Activated naive CD4-positive, alpha-beta T cell treated with anti-CD3 and anti-CD28 coated beads for 36 hours (primary cell): ENCODE measurements at regions of chr16 and their contacts with region 1.

Region 1: GRCh38 chr16:74700438-74701225 is at the start of gene MLKL:
- DNase-seq: peak; percentile 71
- H3K4me3 Mint-ChIP-seq: peak within 1 kb of the TSS; percentile 93
- H3K27ac Mint-ChIP-seq: peak within 1 kb of the TSS; percentile 96
- H3K4me1 Mint-ChIP-seq: peaks cover 61% of the 10 kb centered on the region
- H3K27me3 Mint-ChIP-seq: no peaks in the 10 kb centered on the region
- total RNA-seq, gene MLKL: 10.7 to 12.0 TPM

Region 2: DNA sequence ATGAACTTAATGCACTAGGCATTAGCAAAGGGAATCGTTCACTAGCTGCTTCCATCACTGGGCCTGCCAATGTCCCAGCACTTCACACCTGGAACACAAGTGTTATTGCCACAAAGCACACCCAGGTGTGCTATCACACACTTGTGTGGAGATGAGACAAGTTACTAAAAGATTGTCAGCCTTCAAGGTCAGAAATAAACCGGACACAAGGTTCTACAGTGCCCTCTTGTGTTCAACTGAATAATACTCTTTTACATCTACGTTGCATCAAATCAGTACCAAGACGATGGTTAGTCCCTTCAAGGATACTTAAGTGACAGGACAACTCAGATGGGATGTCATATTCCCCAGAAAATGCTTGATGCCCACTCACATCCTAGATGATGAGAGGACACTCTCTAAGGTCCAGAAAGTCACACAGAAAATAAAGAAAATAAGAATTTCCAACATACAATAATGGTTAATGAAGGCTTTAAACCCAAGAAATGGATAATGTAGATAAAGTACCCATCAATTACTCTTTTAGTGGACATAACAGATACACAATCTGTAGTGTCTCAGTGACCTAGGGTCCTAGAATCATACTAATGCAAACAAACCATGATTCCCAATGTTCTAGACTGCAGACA is 77.3 kb before region 1 on chr16:
- CTCF ChIA-PET with region 1: no interaction called
- intact Hi-C with region 1: loop called (anchors 1 kb)
- DNase-seq: no peak
- H3K4me3 Mint-ChIP-seq: no peak overlapping the region
- H3K27ac Mint-ChIP-seq: peak overlapping the region; percentile 47
- H3K4me1 Mint-ChIP-seq: peaks cover 38% of the 10 kb centered on the region
- H3K27me3 Mint-ChIP-seq: no peaks in the 10 kb centered on the region

Region 3: GRCh38 chr16:74666425-74667254 is 34.0 kb before region 1 on chr16 and contains the start of gene RFWD3:
- CTCF ChIA-PET with region 1: interaction called, 3 read pairs
- intact Hi-C with region 1: loop called (anchors 1 kb)
- DNase-seq: peak; percentile 98
- H3K4me3 Mint-ChIP-seq: peak within 1 kb of the TSS; percentile 89
- H3K27ac Mint-ChIP-seq: peak within 1 kb of the TSS; percentile 88
- H3K4me1 Mint-ChIP-seq: peaks cover 39% of the 10 kb centered on the region
- H3K27me3 Mint-ChIP-seq: no peaks in the 10 kb centered on the region
- total RNA-seq, gene RFWD3: 114 to 124 TPM

Region 4: GRCh38 chr16:74677868-74678267 is 22.8 kb before region 1 on chr16:
- CTCF ChIA-PET with region 1: no interaction called
- intact Hi-C with region 1: no loop called
- DNase-seq: no peak
- H3K4me3 Mint-ChIP-seq: no peak overlapping the region
- H3K27ac Mint-ChIP-seq: no peak overlapping the region
- H3K4me1 Mint-ChIP-seq: no peaks in the 10 kb centered on the region
- H3K27me3 Mint-ChIP-seq: no peaks in the 10 kb centered on the region

Region 5: DNA sequence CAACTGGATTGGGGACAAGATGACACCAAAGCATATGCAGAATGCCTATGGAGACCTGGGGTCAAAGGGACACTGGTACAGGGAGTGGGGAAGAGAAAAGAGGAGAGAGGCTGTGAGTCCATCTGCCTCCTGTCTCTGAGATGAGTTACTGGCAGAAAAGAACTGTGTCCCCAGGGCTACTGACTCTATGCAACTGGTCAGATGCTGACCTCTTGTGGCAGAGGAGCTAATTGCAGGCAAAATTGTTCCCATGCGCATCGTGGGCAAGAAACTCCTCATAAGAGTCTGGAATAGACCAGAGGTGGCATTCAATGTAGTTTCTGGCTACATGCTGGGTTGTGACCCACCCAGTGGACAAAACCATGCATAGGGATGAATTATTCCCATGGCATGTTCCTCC is 26.1 kb after region 1 on chr16:
- CTCF ChIA-PET with region 1: interaction called, 22 read pairs
- intact Hi-C with region 1: no loop called
- DNase-seq: peak; percentile 71
- H3K4me3 Mint-ChIP-seq: no peak overlapping the region
- H3K27ac Mint-ChIP-seq: no peak overlapping the region
- H3K4me1 Mint-ChIP-seq: peaks cover 7% of the 10 kb centered on the region
- H3K27me3 Mint-ChIP-seq: no peaks in the 10 kb centered on the region

Region 6: DNA sequence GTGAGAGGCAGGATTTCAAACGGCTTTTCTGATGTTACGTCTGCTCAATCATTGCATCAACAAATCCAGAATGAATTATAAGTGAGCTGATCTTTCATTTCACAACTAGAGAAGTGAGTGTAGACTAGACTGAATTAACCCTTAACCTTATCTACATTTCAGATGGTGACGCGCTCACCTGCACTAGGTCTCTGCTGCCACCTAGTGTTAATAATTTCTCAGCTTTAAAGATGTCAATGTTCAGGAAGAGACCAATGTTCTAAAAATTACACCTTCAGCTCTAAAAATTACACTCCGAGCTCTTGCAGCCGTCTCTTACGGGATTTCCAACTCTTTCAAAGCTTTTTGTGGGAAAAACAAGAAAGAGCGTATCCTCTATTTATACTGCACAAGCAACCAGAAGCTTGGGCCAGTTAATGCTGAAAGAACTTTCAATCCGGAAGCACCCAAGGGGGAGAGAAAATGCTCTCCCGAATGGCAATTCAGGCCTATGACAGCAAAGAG is 162.2 kb after region 1 on chr16:
- CTCF ChIA-PET with region 1: interaction called, 10 read pairs
- intact Hi-C with region 1: no loop called
- DNase-seq: peak; percentile 42
- H3K4me3 Mint-ChIP-seq: no peak overlapping the region
- H3K27ac Mint-ChIP-seq: no peak overlapping the region
- H3K4me1 Mint-ChIP-seq: peaks cover 8% of the 10 kb centered on the region
- H3K27me3 Mint-ChIP-seq: no peaks in the 10 kb centered on the region

Region 7: GRCh38 chr16:74868501-74868900 is 167.9 kb after region 1 on chr16:
- CTCF ChIA-PET with region 1: interaction called, 10 read pairs
- intact Hi-C with region 1: loop called (anchors 2 kb)
- DNase-seq: peak; percentile 24
- H3K4me3 Mint-ChIP-seq: peak overlapping the region; percentile 25
- H3K27ac Mint-ChIP-seq: peak overlapping the region; percentile 88
- H3K4me1 Mint-ChIP-seq: peaks cover 25% of the 10 kb centered on the region
- H3K27me3 Mint-ChIP-seq: no peaks in the 10 kb centered on the region

Region 8: DNA sequence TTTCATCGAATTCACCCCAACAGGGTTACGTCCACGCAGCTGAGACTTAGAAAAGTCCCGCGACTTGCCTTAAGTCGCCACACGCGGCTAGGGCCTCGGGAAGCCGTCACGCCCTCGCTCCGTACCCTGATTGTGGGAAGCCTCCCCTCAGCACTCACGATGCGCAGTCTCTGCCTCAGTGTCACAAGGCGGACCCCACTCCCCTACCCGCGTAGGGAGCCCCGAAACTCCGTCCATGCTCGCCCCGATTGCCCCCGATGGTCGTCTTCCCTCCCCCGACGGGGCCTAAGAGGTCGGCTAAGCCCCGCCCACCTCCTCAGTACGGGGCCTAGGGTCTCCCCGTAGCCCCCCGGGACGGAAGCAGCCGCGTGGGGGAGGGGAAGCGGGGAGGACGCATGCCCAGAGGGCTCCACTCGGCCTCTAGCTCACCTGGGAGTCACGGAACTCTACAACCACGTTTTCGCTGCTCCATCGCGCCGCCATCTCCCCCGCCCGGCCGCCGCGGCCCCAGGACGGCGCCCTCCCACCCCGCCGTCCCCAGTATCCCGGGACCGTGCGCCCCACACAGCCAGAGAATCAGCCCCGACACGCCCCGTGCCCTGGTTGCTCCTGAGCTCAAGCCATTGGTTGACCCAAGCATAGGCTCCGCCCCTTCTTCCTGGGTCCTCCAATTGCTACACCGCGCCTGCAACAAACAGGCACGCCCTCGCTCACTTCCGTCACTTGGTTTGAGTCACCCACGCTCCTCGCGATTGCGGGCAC is 284.1 kb after region 1 on chr16 and contains the start of gene WDR59:
- CTCF ChIA-PET with region 1: no interaction called
- intact Hi-C with region 1: loop called (anchors 2 kb)
- DNase-seq: peak; percentile 100
- H3K4me3 Mint-ChIP-seq: peak within 1 kb of the TSS; percentile 88
- H3K27ac Mint-ChIP-seq: peak within 1 kb of the TSS; percentile 73
- H3K4me1 Mint-ChIP-seq: peaks cover 16% of the 10 kb centered on the region
- H3K27me3 Mint-ChIP-seq: no peaks in the 10 kb centered on the region
- total RNA-seq, gene WDR59: 47.8 to 55.6 TPM